Activated T-helper 1 cell treated with anti-CD3 and anti-CD28 coated beads, Interleukin-12 subunit alpha, Interleukin-12 subunit beta, Interleukin-2, Interleukin-4 antibody, amounts not matched to agents 30 ng/mL and 10 ng/mL and 1 ng/mL, durations not matched to agents 14 hours and 24 hours and 36 hours (primary cell): ENCODE measurements at regions of chr15 and their contacts with region 1.

Region 1: GRCh38 chr15:90201130-90201949 is at the start of gene SEMA4B:
- DNase-seq: peak; percentile 75
- H3K4me3 Mint-ChIP-seq: peak within 1 kb of the TSS; percentile 92
- H3K27ac Mint-ChIP-seq: peak within 1 kb of the TSS; percentile 67
- H3K4me1 Mint-ChIP-seq: peaks cover 33% of the 10 kb centered on the region
- H3K27me3 Mint-ChIP-seq: peaks cover 5% of the 10 kb centered on the region
- total RNA-seq, gene SEMA4B: 17.5 and 18.8 TPM in 2 replicates

Region 2: DNA sequence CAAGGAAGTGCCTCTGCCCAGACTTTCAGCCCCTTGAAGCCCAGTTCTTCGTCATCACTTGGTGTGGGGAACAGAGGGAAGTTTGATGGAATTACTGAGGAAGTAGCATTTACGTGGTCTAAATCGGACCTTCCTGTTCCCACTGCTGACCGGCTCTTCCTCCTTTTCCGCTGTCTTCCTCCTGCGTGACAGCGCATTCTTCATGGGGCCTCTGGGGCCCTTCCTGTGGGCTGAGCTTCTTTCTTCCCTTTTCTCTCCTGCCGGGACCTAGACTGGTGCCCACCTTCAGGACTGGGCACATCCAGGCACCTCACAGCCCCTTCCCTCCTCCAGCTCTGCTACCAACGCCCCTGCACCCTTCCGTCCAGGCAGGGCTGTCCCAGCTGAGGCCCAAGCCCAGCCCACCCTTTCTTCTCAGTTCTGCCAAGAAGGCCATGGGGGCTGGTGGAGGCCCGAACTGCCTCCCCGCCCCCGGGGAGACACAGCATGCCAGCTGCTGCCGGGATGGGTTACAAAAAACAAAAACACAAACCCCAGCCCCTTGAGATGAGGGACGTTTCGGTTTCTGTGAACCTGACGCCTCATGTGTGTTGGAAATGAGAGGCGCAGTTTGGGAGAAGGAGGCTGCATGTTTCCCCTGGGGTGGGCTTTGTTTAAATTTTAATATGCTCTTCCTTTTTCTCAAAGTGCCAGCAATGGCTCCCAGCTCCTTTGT is 181.2 kb before region 1 on chr15:
- intact Hi-C with region 1: no loop called
- DNase-seq: no peak
- H3K4me3 Mint-ChIP-seq: no peak overlapping the region
- H3K27ac Mint-ChIP-seq: no peak overlapping the region
- H3K4me1 Mint-ChIP-seq: peaks cover 49% of the 10 kb centered on the region
- H3K27me3 Mint-ChIP-seq: no peaks in the 10 kb centered on the region

Region 3: GRCh38 chr15:90165659-90166421 is 35.5 kb before region 1 on chr15:
- intact Hi-C with region 1: loop called (anchors 2 kb)
- DNase-seq: peak; percentile 21
- H3K4me3 Mint-ChIP-seq: peak overlapping the region; percentile 40
- H3K27ac Mint-ChIP-seq: peak overlapping the region; percentile 62
- H3K4me1 Mint-ChIP-seq: peaks cover 21% of the 10 kb centered on the region
- H3K27me3 Mint-ChIP-seq: no peaks in the 10 kb centered on the region

Region 4: GRCh38 chr15:90184786-90185569 is 16.4 kb before region 1 on chr15:
- intact Hi-C with region 1: loop called (anchors 1 kb)
- DNase-seq: peak; percentile 49
- H3K4me3 Mint-ChIP-seq: peak overlapping the region; percentile 87
- H3K27ac Mint-ChIP-seq: peak overlapping the region; percentile 75
- H3K4me1 Mint-ChIP-seq: peaks cover 31% of the 10 kb centered on the region
- H3K27me3 Mint-ChIP-seq: peaks cover 5% of the 10 kb centered on the region